ENCODE measurements at regions of chr18 and their contacts with region 1.

Region 1: DNA sequence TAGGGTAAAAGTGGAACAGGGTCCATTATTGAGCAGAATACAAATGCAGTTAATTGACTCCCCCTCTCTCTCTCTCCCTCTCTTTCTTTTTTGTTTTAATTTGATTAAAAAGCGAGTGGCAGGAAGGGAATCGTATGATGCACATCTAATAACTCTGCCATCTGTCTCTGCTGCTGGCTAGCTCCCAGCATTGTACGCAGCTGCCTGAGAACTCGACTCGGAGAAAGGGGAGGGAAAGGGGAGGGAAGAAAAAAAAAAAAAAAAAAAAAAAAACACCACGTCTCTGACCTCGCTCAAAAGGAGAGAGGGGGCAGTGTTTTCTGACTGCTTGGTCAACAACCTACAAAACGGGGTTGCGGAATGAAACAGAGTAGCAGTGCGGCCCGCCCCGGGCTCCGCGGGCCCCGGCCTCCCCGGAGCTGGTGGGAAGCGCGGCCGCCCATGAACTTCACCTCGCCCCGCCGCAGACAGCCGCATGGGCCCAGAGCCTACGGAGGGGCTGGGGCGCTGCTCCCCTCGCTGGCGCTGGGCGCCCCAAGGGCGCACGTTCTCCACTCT is 265.7 kb downstream of the TCF4 start:
- DNase-seq: peak; percentile 96
- H3K4me3 ChIP-seq: peak overlapping the region; percentile 48 to 63 (median 56)
- H3K27ac ChIP-seq: peak overlapping the region; percentile 88 to 98 (median 90)
- H3K4me1 ChIP-seq: peaks cover 0 to 36% (median 25%) of the 10 kb centered on the region in 4 donors
- H3K27me3 ChIP-seq: no peaks in the 10 kb centered on the region
- CTCF ChIP-seq: no peak
- EP300 ChIP-seq: peak in 1 of 4 donors; percentile 25
- POLR2A ChIP-seq: peak; percentile 26 to 59

Region 2: DNA sequence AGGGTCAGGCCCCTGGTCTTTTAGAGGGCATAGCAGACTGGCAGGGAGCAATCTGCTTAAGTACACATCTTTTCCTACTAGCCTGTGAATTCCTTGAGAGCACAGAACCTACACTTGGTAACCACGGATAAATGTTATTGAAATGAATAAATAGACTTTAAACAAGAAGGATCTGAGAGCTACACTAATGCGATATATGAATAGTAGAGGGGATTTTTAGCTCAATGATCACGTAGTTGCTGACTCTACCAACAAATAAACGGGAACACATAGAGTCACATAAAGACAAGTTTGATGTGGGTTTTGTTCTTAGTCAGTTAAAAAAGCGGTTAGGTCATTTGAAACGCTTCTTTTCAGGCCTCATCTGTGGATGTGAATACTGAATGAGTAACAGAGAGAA is 72.7 kb before region 1 on chr18:
- intact Hi-C with region 1: loop called (anchors 5 kb)
- DNase-seq: no peak
- H3K4me3 ChIP-seq: no peak overlapping the region
- H3K27ac ChIP-seq: no peak overlapping the region
- H3K4me1 ChIP-seq: peaks cover 0 to 60% (median 58%) of the 10 kb centered on the region in 4 donors
- H3K27me3 ChIP-seq: no peaks in the 10 kb centered on the region
- CTCF ChIP-seq: no peak
- EP300 ChIP-seq: no peak
- POLR2A ChIP-seq: no peak

Region 3: GRCh38 chr18:55650363-55650870 is 328.2 kb after region 1 on chr18:
- intact Hi-C with region 1: no loop called
- DNase-seq: no peak
- H3K4me3 ChIP-seq: no peak overlapping the region
- H3K27ac ChIP-seq: no peak overlapping the region
- H3K4me1 ChIP-seq: no peaks in the 10 kb centered on the region
- H3K27me3 ChIP-seq: no peaks in the 10 kb centered on the region
- CTCF ChIP-seq: no peak
- EP300 ChIP-seq: no peak
- POLR2A ChIP-seq: no peak

Region 4: GRCh38 chr18:56638271-56639093 is 1316.2 kb after region 1 on chr18 and contains the start of gene TXNL1:
- intact Hi-C with region 1: loop called (anchors 10 kb)
- DNase-seq: peak; percentile 100
- H3K4me3 ChIP-seq: peak within 1 kb of the TSS; percentile 86 to 93 (median 91)
- H3K27ac ChIP-seq: peak within 1 kb of the TSS; percentile 93 to 99 (median 97)
- H3K4me1 ChIP-seq: peaks cover 0 to 37% (median 27%) of the 10 kb centered on the region in 4 donors
- H3K27me3 ChIP-seq: no peaks in the 10 kb centered on the region
- CTCF ChIP-seq: no peak
- EP300 ChIP-seq: peak in 2 of 4 donors; percentile 45 to 81
- POLR2A ChIP-seq: peak; percentile 81 to 85
- total RNA-seq, gene TXNL1: 39.8 to 47.9 (median 46.1) TPM

Measured in sigmoid colon (tissue), 7 donors.